CD8-positive, alpha-beta T cell (primary cell): ENCODE measurements at regions of chr20 and their contacts with region 1.

Region 1: DNA sequence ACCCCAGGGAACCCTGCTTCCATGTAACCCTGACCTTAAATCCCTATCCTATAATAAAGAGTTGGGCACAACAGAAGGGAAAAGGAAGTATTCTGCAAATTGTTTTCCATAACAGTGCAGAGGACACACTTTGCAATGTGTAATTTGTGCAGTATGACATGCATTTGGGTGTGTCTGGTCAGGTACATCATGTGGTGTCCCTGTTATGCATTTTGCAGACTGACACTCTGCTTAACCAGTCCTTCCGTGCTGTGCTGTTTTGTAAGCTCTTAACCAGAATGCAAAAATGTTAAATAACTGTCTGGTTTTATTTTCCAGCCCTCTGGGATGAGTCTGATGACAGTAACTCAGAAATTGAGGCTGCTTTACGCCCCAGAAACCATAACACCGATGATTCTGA is 57.0 kb upstream of the XRN2 start:
- DNase-seq: no peak
- ATAC-seq: no peak
- H3K4me3 ChIP-seq: no peak overlapping the region
- H3K4me3 Mint-ChIP-seq: no peak overlapping the region
- H3K27ac ChIP-seq: no peak overlapping the region
- H3K27ac Mint-ChIP-seq: no peak overlapping the region
- H3K4me1 ChIP-seq: no peaks in the 10 kb centered on the region
- H3K4me1 Mint-ChIP-seq: no peaks in the 10 kb centered on the region
- H3K27me3 ChIP-seq: no peaks in the 10 kb centered on the region
- H3K27me3 Mint-ChIP-seq: no peaks in the 10 kb centered on the region
- CTCF ChIP-seq: no peak

Region 2: DNA sequence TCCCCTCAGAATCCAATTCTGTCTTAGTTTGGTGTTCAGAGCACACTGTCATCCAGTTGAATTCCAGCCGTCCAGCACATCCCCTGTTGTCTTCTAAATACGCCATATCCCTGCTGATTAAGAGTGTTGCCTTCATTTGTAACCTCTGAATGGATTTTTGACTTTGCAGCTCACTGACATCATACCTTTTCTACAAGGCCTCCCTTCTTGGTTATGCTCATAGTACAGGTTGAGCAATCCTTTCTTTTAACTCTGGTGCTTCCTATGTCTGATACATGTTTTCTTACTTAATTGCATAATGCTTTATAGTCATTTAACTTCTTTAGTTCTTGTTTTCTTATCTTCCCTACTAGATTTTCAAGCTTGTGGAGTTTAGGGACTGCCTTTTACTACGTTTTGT is 93.3 kb after region 1 on chr20:
- CTCF ChIA-PET with region 1: no interaction called
- POLR2A ChIA-PET with region 1: no interaction called
- intact Hi-C with region 1: no loop called
- DNase-seq: no peak
- ATAC-seq: no peak
- H3K4me3 ChIP-seq: no peak overlapping the region
- H3K4me3 Mint-ChIP-seq: no peak overlapping the region
- H3K27ac ChIP-seq: no peak overlapping the region
- H3K27ac Mint-ChIP-seq: no peak overlapping the region
- H3K4me1 ChIP-seq: no peaks in the 10 kb centered on the region
- H3K4me1 Mint-ChIP-seq: peaks cover 2% of the 10 kb centered on the region
- H3K27me3 ChIP-seq: no peaks in the 10 kb centered on the region
- H3K27me3 Mint-ChIP-seq: no peaks in the 10 kb centered on the region
- CTCF ChIP-seq: no peak

Region 3: GRCh38 chr20:21361266-21361665 is 115.1 kb after region 1 on chr20:
- CTCF ChIA-PET with region 1: no interaction called
- POLR2A ChIA-PET with region 1: no interaction called
- intact Hi-C with region 1: loop called in 1 of 2 experiments (anchors 1 kb)
- DNase-seq: no peak
- ATAC-seq: no peak
- H3K4me3 ChIP-seq: no peak overlapping the region
- H3K4me3 Mint-ChIP-seq: no peak overlapping the region
- H3K27ac ChIP-seq: no peak overlapping the region
- H3K27ac Mint-ChIP-seq: no peak overlapping the region
- H3K4me1 ChIP-seq: no peaks in the 10 kb centered on the region
- H3K4me1 Mint-ChIP-seq: no peaks in the 10 kb centered on the region
- H3K27me3 ChIP-seq: no peaks in the 10 kb centered on the region
- H3K27me3 Mint-ChIP-seq: no peaks in the 10 kb centered on the region
- CTCF ChIP-seq: no peak

Region 4: GRCh38 chr20:22248051-22248667 is 1002.0 kb after region 1 on chr20:
- CTCF ChIA-PET with region 1: no interaction called
- POLR2A ChIA-PET with region 1: no interaction called
- intact Hi-C with region 1: no loop called
- DNase-seq: no peak
- ATAC-seq: no peak
- H3K4me3 ChIP-seq: no peak overlapping the region
- H3K4me3 Mint-ChIP-seq: no peak overlapping the region
- H3K27ac ChIP-seq: no peak overlapping the region
- H3K27ac Mint-ChIP-seq: no peak overlapping the region
- H3K4me1 ChIP-seq: no peaks in the 10 kb centered on the region
- H3K4me1 Mint-ChIP-seq: no peaks in the 10 kb centered on the region
- H3K27me3 ChIP-seq: no peaks in the 10 kb centered on the region
- H3K27me3 Mint-ChIP-seq: no peaks in the 10 kb centered on the region
- CTCF ChIP-seq: no peak